ENCODE measurements at regions of chr9 and their contacts with region 1.

Region 1: DNA sequence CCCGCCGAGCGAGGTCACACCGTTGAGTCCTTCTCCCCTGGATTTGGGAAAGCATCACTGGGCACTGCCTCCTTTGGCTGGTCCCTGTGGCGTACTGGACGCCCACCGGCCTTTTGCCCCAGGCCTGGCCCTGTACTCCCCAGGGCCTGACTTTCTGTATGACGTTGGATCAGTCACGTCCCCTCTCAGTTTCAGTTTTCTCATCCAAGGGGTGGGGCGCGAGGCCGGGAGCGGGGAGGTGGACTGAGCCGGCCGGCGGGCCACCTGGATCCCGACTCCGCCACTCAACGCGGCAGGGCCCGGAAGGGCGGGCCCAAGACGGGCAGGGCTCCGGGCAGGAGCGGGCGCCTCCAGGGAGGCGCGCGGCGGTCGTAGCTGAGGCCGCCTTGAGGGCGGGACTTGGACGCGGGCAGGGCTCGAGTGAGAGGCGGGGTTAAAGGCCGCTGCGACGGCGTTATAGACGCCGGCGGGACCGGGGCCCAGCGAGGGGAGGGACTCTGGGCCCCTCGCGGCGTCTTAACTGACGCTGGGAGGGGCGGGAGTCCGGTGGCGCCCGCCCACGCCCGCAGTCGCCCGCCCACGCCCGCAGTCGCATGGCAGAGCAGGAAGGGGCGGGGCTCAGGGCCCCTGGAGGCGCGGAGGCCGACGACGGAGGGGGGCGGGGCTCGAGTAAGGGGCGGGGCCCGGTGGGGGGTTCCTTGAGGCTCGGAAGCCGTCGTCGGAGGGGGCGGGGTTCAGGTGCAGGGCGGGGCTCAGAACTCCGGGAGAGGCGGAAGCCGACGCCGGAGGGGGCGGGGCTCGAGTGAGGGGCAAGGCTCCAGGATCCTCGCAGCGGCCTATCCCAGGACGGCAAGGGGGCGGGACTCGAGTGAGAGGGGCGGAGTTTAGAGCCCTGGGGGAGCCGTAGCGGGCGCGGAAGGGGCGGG is 549 bp upstream of the CARD19 start:
- DNase-seq: peak; percentile 100
- ATAC-seq: peak; percentile 79
- H3K4me3 Mint-ChIP-seq: peak overlapping the region; percentile 80
- H3K27ac Mint-ChIP-seq: peak overlapping the region; percentile 98
- H3K4me1 Mint-ChIP-seq: peaks cover 77% of the 10 kb centered on the region
- H3K27me3 Mint-ChIP-seq: no peaks in the 10 kb centered on the region

Region 2: GRCh38 chr9:92115071-92115858 is 980.2 kb before region 1 on chr9 and contains the start of gene SPTLC1:
- CTCF ChIA-PET with region 1: no interaction called
- POLR2A ChIA-PET with region 1: no interaction called
- intact Hi-C with region 1: loop called in 1 of 2 experiments (anchors 5 kb)
- DNase-seq: peak; percentile 97
- ATAC-seq: peak; percentile 99
- H3K4me3 Mint-ChIP-seq: peak within 1 kb of the TSS; percentile 95
- H3K27ac Mint-ChIP-seq: peak within 1 kb of the TSS; percentile 98
- H3K4me1 Mint-ChIP-seq: peaks cover 26% of the 10 kb centered on the region
- H3K27me3 Mint-ChIP-seq: no peaks in the 10 kb centered on the region
- total RNA-seq, gene SPTLC1: 45.9 to 46.6 TPM

Region 3: DNA sequence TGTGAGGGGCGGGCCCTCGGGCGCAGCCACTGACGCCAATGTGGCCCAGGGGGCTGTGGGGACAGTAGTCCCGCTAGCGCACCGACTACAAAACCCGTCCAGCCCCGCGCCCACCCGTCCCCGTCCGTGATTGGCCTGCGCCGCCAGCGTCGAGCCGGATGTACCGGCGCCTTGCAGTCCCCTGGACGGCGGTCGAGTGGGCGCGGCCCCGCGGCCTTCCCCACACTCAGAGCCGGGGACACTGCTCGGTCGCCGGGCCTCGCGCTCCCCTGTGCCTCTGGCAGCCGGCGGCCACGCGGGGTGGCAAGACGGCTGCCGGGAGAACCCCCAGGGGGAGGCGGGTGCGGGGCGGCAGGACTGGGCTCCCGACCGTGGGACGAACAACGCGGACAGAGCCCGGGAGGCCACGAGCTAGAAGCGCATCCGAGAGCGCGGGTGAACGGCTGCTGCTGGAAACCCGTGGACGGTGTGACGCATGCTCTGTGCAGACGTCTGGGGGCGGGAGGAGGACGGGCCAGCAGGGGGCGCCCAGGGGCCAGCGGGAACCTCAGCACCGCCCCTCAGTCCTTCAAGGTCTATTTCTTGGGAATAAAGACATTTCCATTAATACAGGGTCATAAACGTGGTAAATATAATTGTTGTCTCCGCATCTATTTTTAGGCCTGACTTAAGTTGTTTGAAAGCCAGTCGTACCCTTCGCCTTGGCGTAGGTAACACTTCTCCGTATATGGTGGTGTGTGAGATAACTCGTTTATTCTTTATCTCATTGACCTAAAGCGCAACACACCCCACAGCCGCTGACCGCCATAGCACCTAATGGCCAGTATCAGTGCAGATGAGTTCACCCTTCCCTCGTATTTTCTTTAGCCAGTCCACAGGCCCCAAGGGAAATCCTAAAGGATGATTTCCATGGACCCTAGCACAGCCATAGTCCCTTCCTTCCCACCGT is 330.2 kb before region 1 on chr9:
- CTCF ChIA-PET with region 1: no interaction called
- POLR2A ChIA-PET with region 1: no interaction called
- intact Hi-C with region 1: loop called (anchors 1 to 10 kb)
- DNase-seq: peak; percentile 99
- ATAC-seq: peak; percentile 95
- H3K4me3 Mint-ChIP-seq: peak overlapping the region; percentile 89
- H3K27ac Mint-ChIP-seq: peak overlapping the region; percentile 90
- H3K4me1 Mint-ChIP-seq: peaks cover 47% of the 10 kb centered on the region
- H3K27me3 Mint-ChIP-seq: no peaks in the 10 kb centered on the region

Region 4: DNA sequence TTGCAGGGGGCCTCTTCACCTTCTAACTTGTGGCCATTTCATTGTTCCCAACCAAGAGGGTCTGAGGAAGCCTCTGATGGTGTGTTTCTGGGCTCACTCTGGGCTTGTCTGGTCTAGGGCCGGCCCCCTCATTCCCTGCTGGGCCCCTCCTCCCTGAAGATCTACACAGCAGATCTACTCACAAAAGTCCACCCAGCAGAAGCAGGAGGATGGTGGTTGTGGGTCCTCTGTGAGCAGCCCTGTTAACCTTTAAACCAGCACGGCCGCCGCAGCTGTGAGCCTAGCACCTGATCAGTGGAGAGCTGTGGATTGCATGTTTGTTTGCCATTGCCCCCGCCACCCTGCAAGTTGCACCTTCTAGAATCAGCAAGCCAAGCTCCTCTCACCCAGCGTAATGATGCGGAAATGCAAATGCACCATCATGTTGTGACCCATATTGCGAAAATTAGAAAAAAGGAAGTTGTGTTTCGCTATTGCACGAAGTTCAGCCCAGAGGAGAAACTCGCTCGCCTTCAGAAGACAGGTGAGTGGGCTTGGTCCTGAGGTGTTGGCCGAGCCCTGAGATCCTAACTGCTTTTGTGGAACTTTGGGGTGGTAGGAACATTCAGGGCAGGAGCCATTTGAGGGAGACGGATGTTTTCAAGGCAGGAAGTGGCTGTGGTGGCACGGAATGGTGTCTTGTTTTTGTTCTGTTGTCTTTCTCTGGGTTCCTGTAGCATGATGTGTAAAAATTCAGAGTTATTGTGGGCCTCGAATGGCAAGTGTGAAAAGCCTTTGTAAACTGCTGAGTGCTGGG is 131.4 kb before region 1 on chr9:
- CTCF ChIA-PET with region 1: no interaction called
- POLR2A ChIA-PET with region 1: no interaction called
- intact Hi-C with region 1: loop called (anchors 2 kb)
- DNase-seq: peak; percentile 83
- ATAC-seq: peak; percentile 59
- H3K4me3 Mint-ChIP-seq: peak overlapping the region; percentile 89
- H3K27ac Mint-ChIP-seq: peak overlapping the region; percentile 99
- H3K4me1 Mint-ChIP-seq: peaks cover 56% of the 10 kb centered on the region
- H3K27me3 Mint-ChIP-seq: no peaks in the 10 kb centered on the region

Region 5: GRCh38 chr9:93013856-93014582 is 81.4 kb before region 1 on chr9:
- CTCF ChIA-PET with region 1: no interaction called
- POLR2A ChIA-PET with region 1: no interaction called
- intact Hi-C with region 1: no loop called
- DNase-seq: no peak
- ATAC-seq: no peak
- H3K4me3 Mint-ChIP-seq: no peak overlapping the region
- H3K27ac Mint-ChIP-seq: peak overlapping the region; percentile 72
- H3K4me1 Mint-ChIP-seq: peaks cover 3% of the 10 kb centered on the region
- H3K27me3 Mint-ChIP-seq: no peaks in the 10 kb centered on the region

Region 6: GRCh38 chr9:93064392-93065134 is 30.9 kb before region 1 on chr9:
- CTCF ChIA-PET with region 1: interaction called, 4 read pairs
- POLR2A ChIA-PET with region 1: interaction called, 11 read pairs
- intact Hi-C with region 1: loop called (anchors 1 kb)
- DNase-seq: peak; percentile 96
- ATAC-seq: peak; percentile 90
- H3K4me3 Mint-ChIP-seq: peak overlapping the region; percentile 76
- H3K27ac Mint-ChIP-seq: peak overlapping the region; percentile 98
- H3K4me1 Mint-ChIP-seq: peaks cover 94% of the 10 kb centered on the region
- H3K27me3 Mint-ChIP-seq: no peaks in the 10 kb centered on the region

Region 7: DNA sequence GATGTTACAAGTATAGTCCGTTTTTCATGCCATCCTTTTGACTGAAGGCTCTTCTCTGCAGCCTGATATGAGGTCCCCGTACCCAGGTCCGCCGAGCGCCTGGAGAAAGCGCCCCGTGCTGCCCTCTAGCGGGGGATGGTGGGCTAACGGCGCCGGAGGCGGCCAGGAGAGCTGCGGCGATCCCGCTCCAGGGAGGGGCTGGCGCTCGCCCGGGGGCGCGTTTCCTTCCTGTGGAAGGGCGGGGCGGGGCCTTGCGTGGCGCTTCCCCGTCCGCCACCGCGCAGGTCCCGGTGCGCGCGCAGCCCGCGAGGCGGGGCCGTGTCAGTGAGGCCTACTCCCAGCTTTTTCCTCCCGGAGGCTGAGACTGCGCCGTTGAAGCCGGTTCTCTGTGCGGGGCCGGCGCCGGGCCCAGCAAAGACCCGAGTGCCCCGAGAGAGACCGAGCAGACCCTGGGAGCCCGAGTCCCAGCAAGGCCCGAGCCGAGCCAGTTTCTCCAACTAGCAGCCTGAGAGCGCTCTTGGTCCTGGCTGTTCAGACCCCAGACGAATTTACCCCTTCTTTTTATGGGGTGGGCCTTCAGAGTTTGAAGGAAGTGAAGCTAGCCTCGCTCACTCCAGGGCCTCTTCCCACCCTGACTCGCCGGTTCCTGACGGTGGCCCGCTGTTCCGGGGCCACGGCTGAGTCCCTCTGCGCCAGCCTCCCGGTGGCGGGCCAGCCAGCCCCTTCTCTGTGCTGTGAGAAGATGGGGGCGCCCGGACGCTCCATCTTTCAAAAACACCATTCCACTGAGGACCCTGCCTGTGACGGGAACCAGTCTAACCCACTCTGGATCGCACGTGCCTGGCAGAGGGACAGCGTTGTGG is 471.2 kb after region 1 on chr9:
- CTCF ChIA-PET with region 1: no interaction called
- POLR2A ChIA-PET with region 1: no interaction called
- intact Hi-C with region 1: loop called in 1 of 2 experiments (anchors 1 kb)
- DNase-seq: peak; percentile 99
- ATAC-seq: peak; percentile 98
- H3K4me3 Mint-ChIP-seq: peak overlapping the region; percentile 83
- H3K27ac Mint-ChIP-seq: peak overlapping the region; percentile 89
- H3K4me1 Mint-ChIP-seq: peaks cover 24% of the 10 kb centered on the region
- H3K27me3 Mint-ChIP-seq: no peaks in the 10 kb centered on the region